Posterior vena cava (tissue), 2 donors: ENCODE measurements at regions of chr16 and their contacts with region 1.

Region 1: DNA sequence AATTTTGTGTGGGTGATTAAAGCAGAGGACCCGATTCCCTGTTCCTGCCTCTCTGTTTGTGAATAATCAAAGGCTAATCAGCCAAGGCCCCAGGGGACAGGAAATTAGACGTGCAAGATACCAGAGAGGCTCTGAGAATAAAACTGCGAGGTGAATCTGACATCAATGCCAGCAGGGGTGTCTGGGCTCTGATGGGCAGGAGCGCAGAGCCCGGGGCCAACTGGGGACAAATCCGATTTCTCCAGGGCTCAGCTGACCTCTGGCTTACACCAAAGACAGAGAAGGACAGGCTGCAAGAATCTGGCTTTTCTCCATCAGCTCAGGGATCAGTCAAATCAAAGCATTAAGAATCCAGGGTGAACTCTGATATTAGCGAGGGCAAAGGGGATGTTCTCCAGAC is 174.3 kb downstream of the XYLT1 start:
- DNase-seq: no peak

Region 2: GRCh38 chr16:17318238-17318637 is 21.8 kb after region 1 on chr16:
- intact Hi-C with region 1: no loop called
- DNase-seq: no peak

Region 3: GRCh38 chr16:17845031-17845430 is 548.6 kb after region 1 on chr16:
- intact Hi-C with region 1: loop called in 1 of 2 experiments (anchors 10 kb)
- DNase-seq: no peak